Activated CD8-positive, alpha-beta T cell treated with anti-CD3 and anti-CD28 coated beads, Interleukin-2, amount 10 ng/mL, durations not matched to agents 7 days and 5 days (primary cell): ENCODE measurements at regions of chr1 and their contacts with region 1.

Region 1: DNA sequence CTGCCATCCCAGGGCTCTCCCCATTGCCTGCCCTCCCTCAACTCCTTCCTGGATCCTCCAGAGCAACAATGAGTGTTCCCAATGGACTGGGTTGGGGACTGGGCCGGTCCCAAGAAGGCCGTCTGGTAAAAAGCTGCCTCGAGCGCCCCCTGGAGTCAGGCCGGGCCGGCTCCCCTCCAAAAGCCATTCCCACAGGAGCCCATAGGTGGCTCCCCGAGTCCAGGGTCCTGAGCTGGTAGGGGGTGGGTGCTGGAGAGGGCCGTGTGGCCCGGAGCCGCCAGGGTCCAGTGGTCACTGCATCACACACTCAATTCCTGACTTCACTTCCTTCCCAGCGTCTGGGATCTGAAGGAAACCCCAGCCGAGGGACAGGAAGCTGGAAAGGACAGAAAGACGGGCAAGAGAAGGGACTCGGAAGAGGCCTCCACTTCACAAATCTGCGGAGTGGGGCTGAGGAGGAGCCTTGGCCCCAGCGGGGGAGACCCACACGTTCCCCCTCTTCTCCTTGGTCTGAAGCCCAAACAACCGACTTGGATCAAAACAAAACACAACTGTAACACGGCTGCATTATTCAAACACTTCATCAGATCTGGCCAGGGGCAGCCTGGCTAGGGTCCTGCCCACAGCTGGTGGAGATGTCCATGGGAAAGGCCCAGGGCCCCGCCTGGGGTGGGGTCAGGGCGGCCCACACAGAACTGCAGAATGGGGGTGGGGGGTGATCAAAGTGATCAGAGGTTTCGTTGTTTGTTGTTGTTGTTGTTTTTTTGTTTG is 10.9 kb upstream of the ALDH4A1 start:
- DNase-seq: peak; percentile 74
- ATAC-seq: peak; percentile 93
- H3K4me3 Mint-ChIP-seq: no peak overlapping the region
- H3K27ac Mint-ChIP-seq: no peak overlapping the region
- H3K4me1 Mint-ChIP-seq: peaks cover 4% of the 10 kb centered on the region
- H3K27me3 Mint-ChIP-seq: no peaks in the 10 kb centered on the region

Region 2: GRCh38 chr1:18836654-18837053 is 76.6 kb before region 1 on chr1:
- CTCF ChIA-PET with region 1: no interaction called
- POLR2A ChIA-PET with region 1: no interaction called
- DNase-seq: no peak
- ATAC-seq: no peak
- H3K4me3 Mint-ChIP-seq: no peak overlapping the region
- H3K27ac Mint-ChIP-seq: no peak overlapping the region
- H3K4me1 Mint-ChIP-seq: no peaks in the 10 kb centered on the region
- H3K27me3 Mint-ChIP-seq: no peaks in the 10 kb centered on the region

Region 3: DNA sequence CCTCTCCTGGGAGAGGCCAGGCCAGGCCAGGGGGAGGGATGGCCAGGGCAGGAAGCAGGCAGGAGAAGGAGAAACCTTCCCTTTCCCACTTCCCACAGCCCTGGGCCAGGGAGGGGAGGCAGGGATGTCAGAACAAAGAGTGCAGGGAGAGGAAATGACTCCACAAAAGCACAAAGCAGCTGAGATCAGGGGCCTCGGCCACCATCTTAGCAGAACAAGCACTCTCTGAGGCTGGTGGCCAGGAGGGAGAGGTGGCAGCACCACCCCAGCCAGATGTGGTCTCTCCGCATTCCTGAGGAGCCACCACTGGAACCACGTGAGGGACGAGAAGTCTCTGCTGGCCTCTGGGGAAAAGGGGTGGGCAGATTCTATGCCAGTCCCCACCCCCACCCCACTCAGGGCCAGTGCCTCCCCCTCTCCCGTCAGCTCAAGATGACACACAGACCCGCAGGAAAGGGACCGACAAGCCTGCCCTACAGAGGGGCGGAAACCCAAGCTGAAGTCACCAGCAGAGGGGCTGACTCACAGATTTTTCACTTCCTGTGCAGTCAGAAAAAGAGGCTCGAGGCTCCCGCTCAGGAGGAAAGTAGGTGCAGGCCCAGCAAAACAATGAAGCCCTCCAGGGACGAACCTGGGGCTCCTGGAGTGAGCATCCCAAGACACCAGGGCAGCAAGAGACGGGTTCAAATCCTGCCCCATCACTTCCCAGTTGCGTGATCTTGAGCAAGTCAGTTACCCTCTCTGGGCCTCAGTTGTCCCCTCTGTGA is 13.2 kb after region 1 on chr1:
- CTCF ChIA-PET with region 1: interaction called, 91 read pairs
- POLR2A ChIA-PET with region 1: interaction called, 9 read pairs
- DNase-seq: peak; percentile 94
- ATAC-seq: peak; percentile 87
- H3K4me3 Mint-ChIP-seq: peak overlapping the region; percentile 83
- H3K27ac Mint-ChIP-seq: peak overlapping the region; percentile 98
- H3K4me1 Mint-ChIP-seq: peaks cover 67% of the 10 kb centered on the region
- H3K27me3 Mint-ChIP-seq: no peaks in the 10 kb centered on the region

Region 4: GRCh38 chr1:18956369-18957135 is 43.3 kb after region 1 on chr1 and contains the start of gene IFFO2:
- CTCF ChIA-PET with region 1: interaction called, 54 read pairs
- POLR2A ChIA-PET with region 1: interaction called, 3 read pairs
- DNase-seq: peak; percentile 97
- ATAC-seq: peak; percentile 74
- H3K4me3 Mint-ChIP-seq: peak within 1 kb of the TSS; percentile 77
- H3K27ac Mint-ChIP-seq: peak within 1 kb of the TSS; percentile 72
- H3K4me1 Mint-ChIP-seq: peaks cover 59% of the 10 kb centered on the region
- H3K27me3 Mint-ChIP-seq: peaks cover 45% of the 10 kb centered on the region
- total RNA-seq, gene IFFO2: 7.2 to 8.2 TPM

Region 5: DNA sequence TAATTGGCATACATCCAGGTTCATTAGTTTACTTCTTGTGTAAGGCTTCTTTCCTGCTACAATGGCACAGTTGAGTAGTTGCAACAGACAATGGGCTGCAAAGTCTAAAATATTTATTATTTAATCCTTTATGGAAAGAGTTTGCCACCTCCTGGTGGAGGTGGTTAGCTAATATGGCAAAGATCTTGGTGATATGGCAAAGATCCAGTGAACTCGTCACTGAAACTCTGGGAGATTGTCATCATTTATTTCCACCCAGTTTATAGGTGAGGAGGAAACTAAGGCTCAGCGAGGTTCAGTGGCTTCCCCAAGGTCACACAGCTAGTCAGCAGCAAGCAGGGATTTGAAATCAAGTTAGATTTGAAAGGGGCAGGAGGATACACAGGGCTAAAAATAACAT is 59.3 kb after region 1 on chr1:
- CTCF ChIA-PET with region 1: interaction called, 24 read pairs
- POLR2A ChIA-PET with region 1: no interaction called
- DNase-seq: no peak
- ATAC-seq: no peak
- H3K4me3 Mint-ChIP-seq: no peak overlapping the region
- H3K27ac Mint-ChIP-seq: no peak overlapping the region
- H3K4me1 Mint-ChIP-seq: no peaks in the 10 kb centered on the region
- H3K27me3 Mint-ChIP-seq: peaks cover 11% of the 10 kb centered on the region

Region 6: GRCh38 chr1:19087737-19088594 is 174.7 kb after region 1 on chr1:
- CTCF ChIA-PET with region 1: interaction called, 23 read pairs
- POLR2A ChIA-PET with region 1: no interaction called
- DNase-seq: no peak
- ATAC-seq: no peak
- H3K4me3 Mint-ChIP-seq: no peak overlapping the region
- H3K27ac Mint-ChIP-seq: no peak overlapping the region
- H3K4me1 Mint-ChIP-seq: peaks cover 18% of the 10 kb centered on the region
- H3K27me3 Mint-ChIP-seq: no peaks in the 10 kb centered on the region

Region 7: GRCh38 chr1:19113697-19114092 is 200.4 kb after region 1 on chr1:
- CTCF ChIA-PET with region 1: interaction called, 28 read pairs
- POLR2A ChIA-PET with region 1: no interaction called
- DNase-seq: peak; percentile 68
- ATAC-seq: peak; percentile 69
- H3K4me3 Mint-ChIP-seq: no peak overlapping the region
- H3K27ac Mint-ChIP-seq: no peak overlapping the region
- H3K4me1 Mint-ChIP-seq: no peaks in the 10 kb centered on the region
- H3K27me3 Mint-ChIP-seq: no peaks in the 10 kb centered on the region